ENCODE measurements at regions of chr2 and their contacts with region 1.

Region 1: GRCh38 chr2:165015052-165015642 is 59.8 kb upstream of the SLC38A11 start:
- DNase-seq: peak; percentile 49 to 60
- ATAC-seq: peak in 7 of 8 donors; percentile 55 to 75 (median 69)
- H3K4me3 ChIP-seq: no peak overlapping the region
- H3K27ac ChIP-seq: no peak overlapping the region
- H3K4me1 ChIP-seq: peaks cover 0 to 10% (median 0%) of the 10 kb centered on the region in 9 donors
- H3K27me3 ChIP-seq: no peaks in the 10 kb centered on the region
- CTCF ChIP-seq: peak; percentile 73 to 92 (median 86)

Region 2: GRCh38 chr2:165197346-165197745 is 182.2 kb after region 1 on chr2:
- intact Hi-C with region 1: loop called in 4 of 10 experiments (anchors 5 kb)
- DNase-seq: no peak
- ATAC-seq: no peak
- H3K4me3 ChIP-seq: no peak overlapping the region
- H3K27ac ChIP-seq: no peak overlapping the region
- H3K4me1 ChIP-seq: no peaks in the 10 kb centered on the region
- H3K27me3 ChIP-seq: no peaks in the 10 kb centered on the region
- CTCF ChIP-seq: no peak

Region 3: DNA sequence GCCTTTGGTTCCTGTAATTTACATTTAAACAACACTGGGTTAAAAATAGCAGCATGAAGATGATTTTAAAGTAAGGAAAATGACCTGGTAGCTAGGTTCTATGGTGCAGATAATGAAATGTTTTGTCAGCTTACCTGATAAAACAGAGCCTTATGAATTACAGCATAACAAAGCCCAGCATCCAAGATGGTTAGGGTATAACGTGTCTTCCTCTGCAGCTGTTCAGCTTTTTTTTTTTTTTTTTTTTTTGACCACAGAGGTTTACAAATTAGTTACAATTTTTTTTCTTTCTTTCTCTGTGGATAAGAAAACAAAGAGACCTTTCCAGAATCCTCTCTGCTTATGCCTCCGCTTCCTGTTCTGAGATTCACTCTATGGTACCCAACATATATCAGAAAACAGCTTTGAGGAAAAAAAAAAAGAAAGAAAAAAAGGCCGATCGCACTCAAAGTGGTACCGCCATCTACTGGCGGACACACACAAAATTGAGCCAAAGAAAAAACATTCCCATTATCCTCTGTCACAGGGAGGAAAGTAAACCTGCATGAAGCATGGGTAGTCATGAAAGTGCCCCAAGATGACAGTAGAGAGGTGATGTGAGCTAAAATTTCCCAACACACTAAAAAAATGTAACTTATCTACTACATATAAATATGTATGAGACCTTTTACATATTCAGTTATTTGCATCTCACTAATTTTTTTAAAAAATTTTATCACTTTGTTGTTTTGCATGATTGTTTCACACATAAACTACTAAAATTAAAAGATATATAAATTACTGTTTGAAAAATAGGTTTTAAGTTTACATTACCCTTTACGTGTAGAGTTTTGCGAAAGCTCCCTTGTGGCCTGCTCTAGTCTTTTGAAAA is 188.8 kb after region 1 on chr2 and contains the start of gene SCN3A:
- intact Hi-C with region 1: loop called (anchors 1 to 5 kb)
- DNase-seq: peak; percentile 6 to 10
- ATAC-seq: peak in 1 of 8 donors; percentile 19
- H3K4me3 ChIP-seq: peak within 1 kb of the TSS in 7 of 10 donors; percentile 1 to 37 (median 18)
- H3K27ac ChIP-seq: no peak within 1 kb of the TSS
- H3K4me1 ChIP-seq: no peaks in the 10 kb centered on the region
- H3K27me3 ChIP-seq: no peaks in the 10 kb centered on the region
- CTCF ChIP-seq: peak; percentile 35 to 83 (median 73)
- total RNA-seq, gene SCN3A: 0.53 to 2.6 (median 0.82) TPM

Region 4: GRCh38 chr2:165227571-165227970 is 212.4 kb after region 1 on chr2:
- intact Hi-C with region 1: no loop called
- DNase-seq: no peak
- ATAC-seq: no peak
- H3K4me3 ChIP-seq: no peak overlapping the region
- H3K27ac ChIP-seq: no peak overlapping the region
- H3K4me1 ChIP-seq: no peaks in the 10 kb centered on the region
- H3K27me3 ChIP-seq: peaks cover 0 to 10% (median 0%) of the 10 kb centered on the region in 7 donors
- CTCF ChIP-seq: no peak

Region 5: DNA sequence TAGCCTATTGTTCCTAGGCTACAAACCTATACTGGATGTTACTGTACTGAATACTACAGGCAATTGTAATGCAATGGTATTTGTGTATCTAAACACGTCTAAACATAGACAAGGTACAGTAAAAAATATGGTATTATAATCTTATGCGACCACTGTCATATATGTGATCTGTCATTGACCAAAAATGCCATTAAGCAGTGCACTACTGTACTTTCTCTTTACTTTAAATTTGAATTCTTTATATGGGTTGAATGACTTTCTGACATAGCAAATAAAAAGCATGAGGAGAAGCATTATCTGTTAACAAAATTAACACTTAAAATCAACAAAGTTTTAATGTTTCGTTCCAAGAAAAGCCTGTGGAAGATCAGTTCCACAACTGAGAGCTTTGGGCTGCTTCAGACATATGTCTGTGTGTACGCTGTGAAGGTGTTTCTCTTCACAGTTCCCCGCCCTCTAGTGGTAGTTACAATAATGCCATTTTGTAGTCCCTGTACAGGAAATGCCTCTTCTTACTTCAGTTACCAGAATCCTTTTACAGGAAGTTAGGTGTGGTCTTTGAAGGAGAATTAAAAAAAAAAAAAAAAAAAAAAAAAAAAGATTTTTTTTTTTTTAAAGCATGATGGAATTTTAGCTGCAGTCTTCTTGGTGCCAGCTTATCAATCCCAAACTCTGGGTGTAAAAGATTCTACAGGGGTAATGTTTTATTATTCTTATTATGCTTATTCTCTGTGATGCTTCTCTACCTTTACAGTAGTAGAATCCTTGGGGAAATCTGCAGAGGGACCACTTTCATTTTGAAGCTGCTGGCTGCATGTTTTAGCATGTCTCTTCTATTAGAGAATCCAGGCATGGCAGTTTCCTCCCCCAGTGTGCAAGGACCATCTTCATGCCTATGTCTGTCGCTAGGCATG is 278.6 kb after region 1 on chr2:
- intact Hi-C with region 1: loop called in 4 of 10 experiments (anchors 5 to 10 kb)
- DNase-seq: peak in 1 of 2 donors; percentile 79
- ATAC-seq: peak; percentile 95 to 100 (median 98)
- H3K4me3 ChIP-seq: no peak overlapping the region
- H3K27ac ChIP-seq: no peak overlapping the region
- H3K4me1 ChIP-seq: peaks cover 0 to 5% (median 0%) of the 10 kb centered on the region in 9 donors
- H3K27me3 ChIP-seq: no peaks in the 10 kb centered on the region
- CTCF ChIP-seq: peak; percentile 53 to 80 (median 76)

Region 6: DNA sequence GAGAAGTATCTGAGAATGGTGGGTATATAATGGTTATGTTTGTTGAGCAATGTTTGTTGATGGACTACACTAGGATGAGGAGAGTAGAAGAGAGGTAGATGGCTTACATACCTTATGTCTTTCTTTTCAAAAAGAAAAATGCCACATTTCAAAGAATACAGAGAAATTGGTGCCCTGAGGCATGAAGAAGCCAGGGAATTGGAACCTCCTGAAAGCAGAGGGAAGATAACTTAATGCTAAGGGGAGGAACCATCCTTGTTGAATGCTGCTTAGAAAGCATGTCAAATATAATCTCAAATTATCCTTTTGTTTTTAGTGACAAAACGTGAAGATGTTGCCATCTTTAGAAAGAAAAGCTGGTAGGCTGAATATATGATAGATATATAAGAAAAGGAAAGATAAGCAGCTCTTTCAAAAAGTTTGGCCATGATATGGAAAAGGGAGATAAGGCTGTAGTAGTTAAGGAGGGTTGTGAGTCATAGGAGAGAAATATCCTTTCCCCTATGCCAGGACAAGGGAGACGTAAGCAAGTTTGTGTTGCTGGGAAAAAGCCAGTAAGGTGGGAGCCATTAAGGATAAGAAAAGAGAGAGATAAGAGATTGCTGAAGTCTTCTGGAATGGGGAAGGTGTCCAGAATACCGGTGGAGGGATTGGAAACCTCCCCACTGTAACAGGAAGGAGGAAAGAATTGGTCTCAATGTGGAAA is 290.4 kb after region 1 on chr2:
- intact Hi-C with region 1: loop called in 1 of 10 experiments (anchors 10 kb)
- DNase-seq: no peak
- ATAC-seq: no peak
- H3K4me3 ChIP-seq: no peak overlapping the region
- H3K27ac ChIP-seq: no peak overlapping the region
- H3K4me1 ChIP-seq: no peaks in the 10 kb centered on the region
- H3K27me3 ChIP-seq: peaks cover 0 to 8% (median 0%) of the 10 kb centered on the region in 7 donors
- CTCF ChIP-seq: no peak